ENCODE measurements at regions of chr10 and their contacts with region 1.

Region 1: GRCh38 chr10:77391605-77392235 is 245.9 kb downstream of the KCNMA1 start:
- DNase-seq: peak in 1 of 2 donors; percentile 92
- H3K4me3 ChIP-seq: no peak overlapping the region
- H3K27ac ChIP-seq: peak overlapping the region; percentile 93 to 94
- H3K4me1 ChIP-seq: peaks cover 12 to 67% of the 10 kb centered on the region in 2 donors
- H3K27me3 ChIP-seq: no peaks in the 10 kb centered on the region
- CTCF ChIP-seq: peak; percentile 64 to 81 (median 64)

Region 2: GRCh38 chr10:77173615-77174461 is 217.9 kb before region 1 on chr10:
- intact Hi-C with region 1: loop called (anchors 2 kb)
- DNase-seq: peak in 1 of 2 donors; percentile 88
- H3K4me3 ChIP-seq: no peak overlapping the region
- H3K27ac ChIP-seq: peak overlapping the region in 1 of 2 donors; percentile 13
- H3K4me1 ChIP-seq: peaks cover 2 to 3% of the 10 kb centered on the region in 2 donors
- H3K27me3 ChIP-seq: no peaks in the 10 kb centered on the region
- CTCF ChIP-seq: peak; percentile 88 to 91 (median 90)

Region 3: GRCh38 chr10:77350711-77351119 is 41.0 kb before region 1 on chr10:
- intact Hi-C with region 1: loop called (anchors 5 kb)
- DNase-seq: peak; percentile 41 to 90
- H3K4me3 ChIP-seq: no peak overlapping the region
- H3K27ac ChIP-seq: peak overlapping the region; percentile 60 to 75
- H3K4me1 ChIP-seq: peaks cover 8 to 9% of the 10 kb centered on the region in 2 donors
- H3K27me3 ChIP-seq: no peaks in the 10 kb centered on the region
- CTCF ChIP-seq: peak in 1 of 3 experiments; percentile 5

Region 4: GRCh38 chr10:77513781-77514331 is 122.1 kb after region 1 on chr10:
- intact Hi-C with region 1: loop called (anchors 5 kb)
- DNase-seq: peak; percentile 70 to 94
- H3K4me3 ChIP-seq: no peak overlapping the region
- H3K27ac ChIP-seq: peak overlapping the region; percentile 82 to 86
- H3K4me1 ChIP-seq: peaks cover 6 to 36% of the 10 kb centered on the region in 2 donors
- H3K27me3 ChIP-seq: no peaks in the 10 kb centered on the region
- CTCF ChIP-seq: no peak

Region 5: DNA sequence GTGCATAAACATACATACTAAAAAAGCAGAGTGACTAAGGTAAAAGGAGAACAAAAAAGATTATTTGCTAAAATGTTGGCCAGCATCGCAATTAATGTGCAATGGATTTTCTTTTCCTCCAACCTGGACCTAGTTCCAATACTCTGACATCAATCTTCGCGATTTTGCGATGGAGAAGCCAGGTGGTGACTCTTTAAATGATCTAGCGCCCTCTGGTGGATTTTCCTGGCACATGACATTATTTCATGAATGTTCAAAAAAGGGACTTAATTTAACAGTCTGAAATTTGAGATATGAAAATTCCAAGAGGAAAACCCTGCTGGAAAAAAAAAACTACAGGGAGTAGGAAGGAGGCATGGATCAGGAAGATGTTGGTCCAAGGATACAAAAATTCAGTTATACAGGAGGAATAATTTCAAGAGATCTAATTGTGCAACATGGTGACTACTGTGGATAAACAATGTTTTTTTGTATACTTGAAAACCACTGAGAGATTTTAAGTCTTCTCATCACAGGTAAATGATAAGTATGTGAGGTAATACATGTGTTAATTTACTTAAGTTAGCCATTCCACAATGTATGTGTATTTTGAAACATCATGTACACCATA is 250.2 kb after region 1 on chr10:
- intact Hi-C with region 1: loop called (anchors 1 kb)
- DNase-seq: peak in 1 of 2 donors; percentile 88
- H3K4me3 ChIP-seq: no peak overlapping the region
- H3K27ac ChIP-seq: peak overlapping the region; percentile 79
- H3K4me1 ChIP-seq: peaks cover 9 to 29% of the 10 kb centered on the region in 2 donors
- H3K27me3 ChIP-seq: no peaks in the 10 kb centered on the region
- CTCF ChIP-seq: peak; percentile 77 to 86 (median 85)